Ovary (tissue), 10 donors: ENCODE measurements at regions of chr10 and their contacts with region 1.

Region 1: GRCh38 chr10:74008212-74008731 is 10.4 kb downstream of the VCL start:
- DNase-seq: no peak
- H3K4me3 ChIP-seq: no peak overlapping the region
- H3K27ac ChIP-seq: no peak overlapping the region
- H3K4me1 ChIP-seq: peaks cover 14% of the 10 kb centered on the region
- H3K27me3 ChIP-seq: no peaks in the 10 kb centered on the region
- CTCF ChIP-seq: no peak
- EP300 ChIP-seq: no peak
- POLR2A ChIP-seq: no peak

Region 2: GRCh38 chr10:73545357-73545756 is 462.9 kb before region 1 on chr10:
- intact Hi-C with region 1: no loop called
- DNase-seq: no peak
- H3K4me3 ChIP-seq: no peak overlapping the region
- H3K27ac ChIP-seq: no peak overlapping the region
- H3K4me1 ChIP-seq: no peaks in the 10 kb centered on the region
- H3K27me3 ChIP-seq: no peaks in the 10 kb centered on the region
- CTCF ChIP-seq: no peak
- EP300 ChIP-seq: no peak
- POLR2A ChIP-seq: no peak

Region 3: DNA sequence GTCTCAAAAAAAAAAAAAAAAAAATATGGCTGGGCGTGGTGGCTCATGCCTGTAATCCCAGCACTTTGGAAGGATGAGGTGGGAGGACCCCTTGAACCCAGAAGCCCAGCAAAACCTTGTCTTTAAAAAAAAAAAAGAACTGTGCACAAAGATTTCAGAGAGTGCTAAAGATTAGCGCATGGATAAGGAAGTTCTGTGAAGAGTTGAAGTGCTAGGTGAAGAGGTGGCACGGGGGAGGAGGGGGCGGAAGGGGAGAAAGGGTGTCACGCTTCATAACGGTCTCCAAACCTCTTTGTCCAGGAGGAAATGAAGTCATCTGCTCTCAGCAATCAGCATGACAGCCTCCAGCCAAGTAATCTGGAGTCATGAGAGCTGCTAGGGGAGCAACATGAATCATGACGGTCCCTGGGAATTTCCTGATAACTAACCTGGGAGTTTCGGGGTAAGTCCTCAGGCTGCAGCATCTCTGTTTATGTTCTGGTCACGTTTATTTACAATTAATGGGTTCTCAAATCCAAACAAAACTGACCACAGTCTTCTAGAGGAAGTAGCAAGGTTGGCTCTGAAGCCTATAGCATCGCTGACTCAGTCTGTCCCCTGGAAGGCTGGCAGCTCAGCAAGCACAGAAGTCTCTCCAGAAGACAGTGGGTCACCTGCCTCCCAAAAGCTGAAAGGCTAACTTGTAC is 99.3 kb before region 1 on chr10:
- intact Hi-C with region 1: no loop called
- DNase-seq: no peak
- H3K4me3 ChIP-seq: no peak overlapping the region
- H3K27ac ChIP-seq: no peak overlapping the region
- H3K4me1 ChIP-seq: peaks cover 10% of the 10 kb centered on the region
- H3K27me3 ChIP-seq: no peaks in the 10 kb centered on the region
- CTCF ChIP-seq: no peak
- EP300 ChIP-seq: no peak
- POLR2A ChIP-seq: no peak

Region 4: GRCh38 chr10:74058658-74059057 is 50.4 kb after region 1 on chr10:
- intact Hi-C with region 1: loop called in 1 of 4 experiments (anchors 10 kb)
- DNase-seq: no peak
- H3K4me3 ChIP-seq: no peak overlapping the region
- H3K27ac ChIP-seq: no peak overlapping the region
- H3K4me1 ChIP-seq: peaks cover 6% of the 10 kb centered on the region
- H3K27me3 ChIP-seq: no peaks in the 10 kb centered on the region
- CTCF ChIP-seq: no peak
- EP300 ChIP-seq: no peak
- POLR2A ChIP-seq: no peak